ENCODE measurements at regions of chr10 and their contacts with region 1.

Region 1: GRCh38 chr10:119445311-119445934 is 97.1 kb downstream of the RGS10 start:
- DNase-seq: peak; percentile 57
- H3K4me3 ChIP-seq: no peak overlapping the region
- H3K27ac ChIP-seq: no peak overlapping the region
- H3K4me1 ChIP-seq: no peaks in the 10 kb centered on the region
- H3K27me3 ChIP-seq: no peaks in the 10 kb centered on the region
- CTCF ChIP-seq: peak; percentile 78 to 96
- POLR2A ChIP-seq: no peak

Region 2: GRCh38 chr10:119165171-119166110 is 280.0 kb before region 1 on chr10 and contains the start of gene SFXN4:
- CTCF ChIA-PET with region 1: interaction called, 12 read pairs
- POLR2A ChIA-PET with region 1: no interaction called
- dilution Hi-C with region 1: no loop called
- intact Hi-C with region 1: no loop called
- DNase-seq: peak; percentile 68
- H3K4me3 ChIP-seq: peak within 1 kb of the TSS; percentile 48 to 70 (median 62)
- H3K27ac ChIP-seq: peak within 1 kb of the TSS; percentile 54
- H3K4me1 ChIP-seq: peaks cover 24% of the 10 kb centered on the region
- H3K27me3 ChIP-seq: no peaks in the 10 kb centered on the region
- CTCF ChIP-seq: no peak
- POLR2A ChIP-seq: peak; percentile 81
- total RNA-seq, gene SFXN4: 14.5 and 17.1 TPM in 2 replicates

Region 3: GRCh38 chr10:119431034-119431767 is 14.2 kb before region 1 on chr10:
- CTCF ChIA-PET with region 1: interaction called, 10 read pairs
- POLR2A ChIA-PET with region 1: no interaction called
- dilution Hi-C with region 1: no loop called
- intact Hi-C with region 1: no loop called
- DNase-seq: no peak
- H3K4me3 ChIP-seq: no peak overlapping the region
- H3K27ac ChIP-seq: no peak overlapping the region
- H3K4me1 ChIP-seq: no peaks in the 10 kb centered on the region
- H3K27me3 ChIP-seq: no peaks in the 10 kb centered on the region
- CTCF ChIP-seq: no peak
- POLR2A ChIP-seq: no peak

Region 4: DNA sequence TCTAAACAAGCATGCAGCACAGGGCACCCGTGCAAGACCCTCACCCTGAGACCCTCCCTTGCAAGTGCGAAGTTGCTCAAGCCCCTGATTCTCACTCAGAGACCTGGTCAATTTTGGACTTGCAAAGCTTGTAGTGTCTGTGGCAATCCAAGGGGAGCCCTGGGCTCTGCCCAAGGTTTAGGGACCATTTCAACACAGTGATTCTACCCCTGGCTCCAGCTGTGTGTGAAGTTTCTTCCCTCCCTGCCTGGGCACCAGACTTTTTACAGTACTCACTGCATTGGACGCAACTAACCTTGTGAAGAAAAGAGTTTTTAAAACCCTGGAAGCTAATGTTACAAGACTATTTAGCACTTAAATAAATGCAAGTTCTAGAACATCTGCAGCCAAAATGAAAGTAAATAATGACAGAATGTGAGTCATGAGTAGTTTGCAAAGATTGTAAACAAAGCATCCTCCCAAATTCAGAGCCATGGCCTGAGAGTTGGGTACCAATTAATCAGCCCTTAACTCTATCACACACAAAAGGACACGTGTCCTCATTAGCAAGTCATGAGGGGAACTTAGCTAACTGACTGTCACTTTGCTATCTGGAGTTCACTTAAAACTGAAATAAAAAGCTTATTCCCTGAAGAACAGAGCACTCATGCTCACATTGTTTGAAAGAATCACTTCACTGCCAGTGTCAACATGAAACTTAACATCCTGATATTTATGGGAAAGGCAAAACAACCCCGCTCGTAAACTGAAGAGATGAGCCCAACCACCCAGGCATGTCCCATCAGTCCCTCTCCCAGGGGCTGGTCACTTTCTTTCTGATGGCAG is 49.0 kb after region 1 on chr10:
- CTCF ChIA-PET with region 1: interaction called, 35 read pairs
- POLR2A ChIA-PET with region 1: no interaction called
- dilution Hi-C with region 1: no loop called
- intact Hi-C with region 1: loop called (anchors 5 kb)
- DNase-seq: no peak
- H3K4me3 ChIP-seq: no peak overlapping the region
- H3K27ac ChIP-seq: no peak overlapping the region
- H3K4me1 ChIP-seq: no peaks in the 10 kb centered on the region
- H3K27me3 ChIP-seq: no peaks in the 10 kb centered on the region
- CTCF ChIP-seq: no peak
- POLR2A ChIP-seq: no peak

Region 5: GRCh38 chr10:119567978-119568377 is 122.6 kb after region 1 on chr10:
- CTCF ChIA-PET with region 1: no interaction called
- POLR2A ChIA-PET with region 1: no interaction called
- dilution Hi-C with region 1: no loop called
- intact Hi-C with region 1: no loop called
- DNase-seq: no peak
- H3K4me3 ChIP-seq: no peak overlapping the region
- H3K27ac ChIP-seq: no peak overlapping the region
- H3K4me1 ChIP-seq: no peaks in the 10 kb centered on the region
- H3K27me3 ChIP-seq: no peaks in the 10 kb centered on the region
- CTCF ChIP-seq: no peak
- POLR2A ChIP-seq: no peak

Region 6: GRCh38 chr10:119595676-119596515 is 150.5 kb after region 1 on chr10:
- CTCF ChIA-PET with region 1: no interaction called
- POLR2A ChIA-PET with region 1: no interaction called
- dilution Hi-C with region 1: no loop called
- intact Hi-C with region 1: no loop called
- DNase-seq: peak; percentile 50
- H3K4me3 ChIP-seq: peak overlapping the region; percentile 85 to 97 (median 97)
- H3K27ac ChIP-seq: peak overlapping the region; percentile 56
- H3K4me1 ChIP-seq: peaks cover 43% of the 10 kb centered on the region
- H3K27me3 ChIP-seq: no peaks in the 10 kb centered on the region
- CTCF ChIP-seq: no peak
- POLR2A ChIP-seq: no peak